Prostate gland (tissue), 2 donors: ENCODE measurements at regions of chr20 and their contacts with region 1.

Region 1: DNA sequence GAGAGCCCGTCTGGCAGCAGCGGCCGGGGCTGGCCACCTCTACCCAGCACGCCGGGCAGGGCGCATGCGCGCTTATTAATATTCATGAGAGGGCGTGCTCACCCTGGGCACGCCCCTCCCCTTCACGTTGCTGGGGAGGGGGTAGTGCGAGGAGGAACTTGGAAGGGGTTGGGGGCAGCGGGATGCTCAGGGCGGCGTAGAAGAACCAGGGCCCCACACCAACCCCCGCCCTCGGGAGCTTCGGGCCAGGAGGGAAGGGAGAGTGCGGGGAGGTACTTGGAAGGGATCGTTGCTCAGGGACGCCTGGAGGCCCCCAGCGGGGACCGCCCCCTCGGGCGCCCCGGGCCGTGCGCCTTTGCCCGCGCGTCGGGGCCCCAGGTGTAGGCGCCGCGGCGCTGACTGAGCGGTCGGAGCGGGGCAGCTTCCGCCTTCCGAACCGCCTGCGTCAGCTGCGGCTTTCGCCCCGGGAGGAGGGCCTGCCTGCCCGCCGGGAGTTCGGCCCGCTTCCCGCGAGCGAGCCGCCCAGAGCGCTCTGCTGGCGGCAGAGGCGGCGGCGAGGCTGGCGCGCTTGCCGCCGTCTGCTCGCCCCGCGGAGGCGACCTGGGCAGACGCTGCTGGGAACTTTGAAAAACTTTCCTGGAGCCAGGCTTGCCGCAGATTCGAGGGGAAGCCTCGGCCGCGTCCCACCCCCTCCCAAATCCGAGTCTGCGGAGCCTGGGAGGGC is at the start of gene JAG1:
- DNase-seq: peak; percentile 97
- H3K4me3 ChIP-seq: peak within 1 kb of the TSS; percentile 86 to 91
- H3K27ac ChIP-seq: peak within 1 kb of the TSS; percentile 99 to 100
- H3K4me1 ChIP-seq: no peaks in the 10 kb centered on the region
- H3K27me3 ChIP-seq: no peaks in the 10 kb centered on the region
- CTCF ChIP-seq: no peak
- POLR2A ChIP-seq: peak; percentile 95
- total RNA-seq, gene JAG1: 46.5 to 72.3 TPM

Region 2: GRCh38 chr20:10474606-10475184 is 199.5 kb before region 1 on chr20:
- intact Hi-C with region 1: loop called (anchors 5 kb)
- DNase-seq: no peak
- H3K4me3 ChIP-seq: no peak overlapping the region
- H3K27ac ChIP-seq: no peak overlapping the region
- H3K4me1 ChIP-seq: no peaks in the 10 kb centered on the region
- H3K27me3 ChIP-seq: no peaks in the 10 kb centered on the region
- CTCF ChIP-seq: no peak
- POLR2A ChIP-seq: no peak

Region 3: GRCh38 chr20:10553326-10553984 is 120.7 kb before region 1 on chr20:
- intact Hi-C with region 1: loop called (anchors 2 kb)
- DNase-seq: peak; percentile 72
- H3K4me3 ChIP-seq: no peak overlapping the region
- H3K27ac ChIP-seq: no peak overlapping the region
- H3K4me1 ChIP-seq: no peaks in the 10 kb centered on the region
- H3K27me3 ChIP-seq: no peaks in the 10 kb centered on the region
- CTCF ChIP-seq: peak; percentile 53 to 85 (median 78)
- POLR2A ChIP-seq: no peak

Region 4: GRCh38 chr20:11274141-11274594 is 600.0 kb after region 1 on chr20:
- intact Hi-C with region 1: loop called (anchors 2 kb)
- DNase-seq: peak; percentile 54
- H3K4me3 ChIP-seq: no peak overlapping the region
- H3K27ac ChIP-seq: no peak overlapping the region
- H3K4me1 ChIP-seq: no peaks in the 10 kb centered on the region
- H3K27me3 ChIP-seq: no peaks in the 10 kb centered on the region
- CTCF ChIP-seq: peak in 3 of 4 experiments; percentile 47 to 69 (median 68)
- POLR2A ChIP-seq: no peak